MCF 10A (cell line): ENCODE measurements at regions of chr2 and their contacts with region 1.

Region 1: GRCh38 chr2:64523666-64524603 is at the start of gene AFTPH:
- DNase-seq: peak; percentile 99
- H3K4me3 Mint-ChIP-seq: peak within 1 kb of the TSS; percentile 83
- H3K27ac Mint-ChIP-seq: peak within 1 kb of the TSS; percentile 94
- H3K4me1 Mint-ChIP-seq: peaks cover 8% of the 10 kb centered on the region
- H3K27me3 Mint-ChIP-seq: no peaks in the 10 kb centered on the region
- CTCF ChIP-seq: no peak
- total RNA-seq, gene AFTPH: 24.2 and 24.7 TPM in 2 replicates

Region 2: GRCh38 chr2:64144057-64145013 is 379.6 kb before region 1 on chr2 and contains the start of gene PELI1:
- CTCF ChIA-PET with region 1: interaction called, 4 read pairs
- POLR2A ChIA-PET with region 1: interaction called, 7 read pairs
- intact Hi-C with region 1: loop called (anchors 2 kb)
- DNase-seq: peak; percentile 96
- H3K4me3 Mint-ChIP-seq: peak within 1 kb of the TSS; percentile 88
- H3K27ac Mint-ChIP-seq: peak within 1 kb of the TSS; percentile 95
- H3K4me1 Mint-ChIP-seq: peaks cover 6% of the 10 kb centered on the region
- H3K27me3 Mint-ChIP-seq: no peaks in the 10 kb centered on the region
- CTCF ChIP-seq: peak; percentile 20
- total RNA-seq, gene PELI1: 13.5 and 16.3 TPM in 2 replicates

Region 3: GRCh38 chr2:64474121-64474571 is 49.8 kb before region 1 on chr2:
- CTCF ChIA-PET with region 1: no interaction called
- POLR2A ChIA-PET with region 1: no interaction called
- intact Hi-C with region 1: no loop called
- DNase-seq: no peak
- H3K4me3 Mint-ChIP-seq: no peak overlapping the region
- H3K27ac Mint-ChIP-seq: no peak overlapping the region
- H3K4me1 Mint-ChIP-seq: peaks cover 10% of the 10 kb centered on the region
- H3K27me3 Mint-ChIP-seq: no peaks in the 10 kb centered on the region
- CTCF ChIP-seq: no peak

Region 4: GRCh38 chr2:64488050-64488974 is 35.6 kb before region 1 on chr2:
- CTCF ChIA-PET with region 1: interaction called, 10 read pairs
- POLR2A ChIA-PET with region 1: interaction called, 13 read pairs
- intact Hi-C with region 1: no loop called
- DNase-seq: peak; percentile 72
- H3K4me3 Mint-ChIP-seq: no peak overlapping the region
- H3K27ac Mint-ChIP-seq: no peak overlapping the region
- H3K4me1 Mint-ChIP-seq: peaks cover 27% of the 10 kb centered on the region
- H3K27me3 Mint-ChIP-seq: no peaks in the 10 kb centered on the region
- CTCF ChIP-seq: peak; percentile 92

Region 5: GRCh38 chr2:64554117-64554516 is 30.2 kb after region 1 on chr2:
- CTCF ChIA-PET with region 1: interaction called, 6 read pairs
- POLR2A ChIA-PET with region 1: interaction called, 13 read pairs
- intact Hi-C with region 1: loop called (anchors 1 kb)
- DNase-seq: no peak
- H3K4me3 Mint-ChIP-seq: no peak overlapping the region
- H3K27ac Mint-ChIP-seq: no peak overlapping the region
- H3K4me1 Mint-ChIP-seq: peaks cover 6% of the 10 kb centered on the region
- H3K27me3 Mint-ChIP-seq: no peaks in the 10 kb centered on the region
- CTCF ChIP-seq: no peak

Region 6: DNA sequence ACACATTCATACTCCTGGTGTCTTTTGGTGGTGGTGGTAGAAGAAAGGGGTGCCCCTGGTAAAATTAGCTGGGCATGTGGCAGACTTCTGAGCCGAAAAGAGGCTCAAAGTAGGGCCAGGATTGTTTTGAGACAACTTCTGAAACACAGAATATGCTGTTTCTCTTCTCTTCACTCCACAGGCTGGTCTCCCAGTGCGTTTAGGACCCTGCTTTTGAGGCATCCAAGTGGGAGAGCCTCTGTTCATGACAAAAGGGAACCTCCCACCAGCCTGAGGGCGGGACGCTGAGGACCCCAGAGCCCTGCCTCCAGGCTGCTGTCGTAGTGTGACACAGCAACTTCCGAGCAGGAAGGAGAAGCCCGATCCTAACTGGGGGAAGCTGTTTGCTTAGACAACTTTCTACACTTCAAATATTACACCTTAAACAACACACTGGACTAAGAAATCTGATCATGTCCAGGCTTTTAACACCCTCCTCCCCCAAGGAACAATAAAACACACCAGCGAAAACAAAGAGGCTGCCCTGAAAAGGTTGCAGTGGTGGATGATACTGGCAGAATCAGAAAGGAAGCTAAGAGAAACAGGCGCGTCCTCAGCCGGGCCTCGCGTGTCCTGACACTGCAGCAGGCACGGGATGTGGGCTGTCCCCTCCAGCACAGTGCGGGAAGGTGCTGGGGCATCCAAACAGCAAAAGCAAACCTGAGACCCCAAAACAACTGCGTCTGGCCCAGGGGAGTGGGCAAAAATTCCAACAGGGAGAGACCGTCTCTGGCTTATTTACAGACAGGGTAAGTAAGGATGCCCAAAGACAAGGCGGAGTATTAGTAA is 120.5 kb after region 1 on chr2:
- CTCF ChIA-PET with region 1: interaction called, 8 read pairs
- POLR2A ChIA-PET with region 1: interaction called, 60 read pairs
- intact Hi-C with region 1: loop called (anchors 1 kb)
- DNase-seq: peak; percentile 64
- H3K4me3 Mint-ChIP-seq: peak overlapping the region; percentile 78
- H3K27ac Mint-ChIP-seq: peak overlapping the region; percentile 96
- H3K4me1 Mint-ChIP-seq: peaks cover 32% of the 10 kb centered on the region
- H3K27me3 Mint-ChIP-seq: no peaks in the 10 kb centered on the region
- CTCF ChIP-seq: no peak

Region 7: DNA sequence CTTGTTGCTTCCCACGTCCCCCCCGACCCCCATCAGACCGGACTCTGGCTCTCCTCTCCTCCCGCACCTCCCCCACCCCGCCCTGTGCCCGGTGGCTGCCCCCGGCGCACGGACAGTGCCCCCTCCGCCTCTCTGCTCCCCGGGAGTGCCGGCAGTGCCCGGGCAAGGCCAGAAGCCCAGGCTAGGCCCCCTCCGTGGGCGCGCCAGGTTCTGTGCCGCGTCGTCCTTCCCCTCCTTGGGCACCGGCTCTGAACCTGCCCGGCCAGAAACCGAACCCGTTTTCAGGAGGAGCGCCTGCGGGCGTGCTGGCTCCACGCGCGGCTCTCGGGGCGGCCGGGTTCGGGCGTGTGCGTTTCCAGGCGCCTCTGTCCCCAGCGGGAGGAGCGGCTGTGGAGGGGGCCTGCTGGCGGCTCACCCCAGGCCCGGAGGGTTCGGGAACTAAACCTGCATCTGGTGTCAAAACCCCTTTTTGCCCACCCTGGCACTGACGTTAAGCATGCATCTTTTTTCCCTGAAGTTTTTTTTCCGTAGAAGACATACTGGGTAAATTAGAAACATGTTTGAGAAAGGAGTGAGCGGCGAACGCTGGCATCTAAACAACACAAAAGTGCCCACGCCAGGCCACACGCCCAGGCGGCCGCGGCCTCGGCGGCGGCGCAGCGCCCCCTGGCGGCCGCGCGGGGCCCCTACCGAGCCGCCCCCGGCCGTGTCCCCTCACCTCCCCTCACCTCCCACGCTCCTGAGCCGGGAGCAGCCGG is 341.3 kb after region 1 on chr2:
- CTCF ChIA-PET with region 1: interaction called, 6 read pairs
- POLR2A ChIA-PET with region 1: interaction called, 18 read pairs
- intact Hi-C with region 1: loop called (anchors 1 kb)
- DNase-seq: peak; percentile 68
- H3K4me3 Mint-ChIP-seq: peak overlapping the region; percentile 64
- H3K27ac Mint-ChIP-seq: no peak overlapping the region
- H3K4me1 Mint-ChIP-seq: peaks cover 7% of the 10 kb centered on the region
- H3K27me3 Mint-ChIP-seq: no peaks in the 10 kb centered on the region
- CTCF ChIP-seq: peak; percentile 86